ENCODE measurements at regions of chr1 and their contacts with region 1.

Region 1: GRCh38 chr1:94061513-94062443 is 59.2 kb downstream of the ABCA4 start:
- DNase-seq: peak; percentile 53 to 85
- ATAC-seq: peak; percentile 65 to 91 (median 84)
- H3K4me3 ChIP-seq: no peak overlapping the region
- H3K27ac ChIP-seq: peak overlapping the region in 9 of 10 donors; percentile 33 to 81 (median 62)
- H3K4me1 ChIP-seq: peaks cover 0 to 77% (median 49%) of the 10 kb centered on the region in 9 donors
- H3K27me3 ChIP-seq: peaks cover 0 to 9% (median 0%) of the 10 kb centered on the region in 7 donors
- CTCF ChIP-seq: peak; percentile 81 to 94 (median 89)

Region 2: GRCh38 chr1:94095112-94095637 is 33.4 kb after region 1 on chr1:
- intact Hi-C with region 1: loop called in 2 of 10 experiments (anchors 2 to 5 kb)
- DNase-seq: peak; percentile 87 to 90
- ATAC-seq: peak; percentile 77 to 87 (median 84)
- H3K4me3 ChIP-seq: peak overlapping the region in 3 of 10 donors; percentile 5 to 23 (median 8)
- H3K27ac ChIP-seq: peak overlapping the region; percentile 67 to 90 (median 83)
- H3K4me1 ChIP-seq: peaks cover 13 to 92% (median 65%) of the 10 kb centered on the region in 9 donors
- H3K27me3 ChIP-seq: peaks cover 0 to 29% (median 0%) of the 10 kb centered on the region in 7 donors
- CTCF ChIP-seq: peak in 1 of 9 donors; percentile 15

Region 3: DNA sequence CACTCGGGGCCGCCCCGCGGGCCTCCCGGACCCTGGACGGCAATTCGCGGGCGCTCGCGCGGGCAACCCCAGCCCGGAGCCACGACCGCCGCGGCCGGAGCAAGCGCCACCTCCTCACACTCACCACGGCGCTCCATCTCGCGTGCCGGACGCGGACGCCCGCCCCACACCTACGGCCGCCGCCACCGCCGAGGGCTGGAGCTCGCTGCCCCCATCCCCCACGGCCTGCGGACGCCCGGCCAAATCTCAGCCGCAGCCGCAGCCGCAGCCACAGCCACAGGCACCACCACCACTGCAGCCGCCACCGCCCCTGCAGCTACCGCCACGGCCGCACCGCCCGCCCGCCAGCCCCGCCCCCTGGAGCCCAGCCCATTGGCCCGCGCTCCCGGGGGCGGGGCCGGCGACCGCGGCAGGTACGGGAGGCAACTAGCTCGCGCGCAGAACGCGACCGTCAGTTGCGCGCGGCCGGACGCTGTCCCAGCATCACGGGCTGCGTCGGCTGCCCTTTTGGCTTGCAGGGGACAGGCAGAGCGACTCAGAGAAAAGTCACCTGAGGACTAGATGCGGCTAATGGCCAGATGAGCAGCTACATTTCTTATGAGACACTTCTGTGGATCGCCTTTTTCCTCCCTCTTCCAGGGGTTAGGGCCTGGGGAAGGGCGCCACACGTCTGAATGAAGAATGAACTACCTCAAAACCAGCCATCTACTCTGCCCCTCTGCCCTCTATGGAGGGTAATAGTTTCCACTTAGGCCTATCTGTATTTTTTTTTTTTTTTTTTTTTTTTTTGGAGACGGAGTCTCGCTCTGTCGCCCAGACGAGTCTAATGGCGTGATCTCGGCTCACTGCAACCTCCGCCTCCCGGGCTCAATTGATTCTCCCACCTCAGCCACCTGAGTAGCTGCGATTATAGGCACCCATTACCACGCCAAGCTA is 175.8 kb after region 1 on chr1 and contains the start of gene ARHGAP29:
- intact Hi-C with region 1: loop called in 7 of 10 experiments (anchors 2 to 5 kb)
- DNase-seq: peak; percentile 87 to 90
- ATAC-seq: peak; percentile 93 to 99 (median 96)
- H3K4me3 ChIP-seq: peak within 1 kb of the TSS; percentile 75 to 100 (median 92)
- H3K27ac ChIP-seq: peak within 1 kb of the TSS; percentile 94 to 99 (median 98)
- H3K4me1 ChIP-seq: peaks cover 0 to 66% (median 30%) of the 10 kb centered on the region in 9 donors
- H3K27me3 ChIP-seq: peaks cover 0 to 86% (median 0%) of the 10 kb centered on the region in 7 donors
- CTCF ChIP-seq: peak in 2 of 9 donors; percentile 19 to 23
- total RNA-seq, gene ARHGAP29: 20.9 to 34.3 (median 28.8) TPM

Region 4: GRCh38 chr1:94329986-94330385 is 268.2 kb after region 1 on chr1:
- intact Hi-C with region 1: loop called in 9 of 10 experiments (anchors 1 to 5 kb)
- DNase-seq: peak in 1 of 2 donors; percentile 24
- ATAC-seq: peak in 6 of 8 donors; percentile 28 to 54 (median 41)
- H3K4me3 ChIP-seq: peak overlapping the region in 4 of 10 donors; percentile 5 to 18 (median 9)
- H3K27ac ChIP-seq: peak overlapping the region in 9 of 10 donors; percentile 34 to 91 (median 78)
- H3K4me1 ChIP-seq: peaks cover 0 to 83% (median 58%) of the 10 kb centered on the region in 9 donors
- H3K27me3 ChIP-seq: peaks cover 0 to 16% (median 0%) of the 10 kb centered on the region in 7 donors
- CTCF ChIP-seq: peak in 8 of 9 donors; percentile 38 to 71 (median 54)

Measured in heart right ventricle (tissue), 16 donors.